CD8-positive, alpha-beta T cell (primary cell): ENCODE measurements at regions of chr12 and their contacts with region 1.

Region 1: GRCh38 chr12:71694099-71694820 is 8.4 kb downstream of the TMEM19 start:
- DNase-seq: no peak
- ATAC-seq: no peak
- H3K4me3 ChIP-seq: no peak overlapping the region
- H3K4me3 Mint-ChIP-seq: no peak overlapping the region
- H3K27ac ChIP-seq: no peak overlapping the region
- H3K27ac Mint-ChIP-seq: no peak overlapping the region
- H3K4me1 ChIP-seq: peaks cover 2% of the 10 kb centered on the region
- H3K4me1 Mint-ChIP-seq: peaks cover 16% of the 10 kb centered on the region
- H3K27me3 ChIP-seq: no peaks in the 10 kb centered on the region
- H3K27me3 Mint-ChIP-seq: no peaks in the 10 kb centered on the region
- CTCF ChIP-seq: no peak

Region 2: DNA sequence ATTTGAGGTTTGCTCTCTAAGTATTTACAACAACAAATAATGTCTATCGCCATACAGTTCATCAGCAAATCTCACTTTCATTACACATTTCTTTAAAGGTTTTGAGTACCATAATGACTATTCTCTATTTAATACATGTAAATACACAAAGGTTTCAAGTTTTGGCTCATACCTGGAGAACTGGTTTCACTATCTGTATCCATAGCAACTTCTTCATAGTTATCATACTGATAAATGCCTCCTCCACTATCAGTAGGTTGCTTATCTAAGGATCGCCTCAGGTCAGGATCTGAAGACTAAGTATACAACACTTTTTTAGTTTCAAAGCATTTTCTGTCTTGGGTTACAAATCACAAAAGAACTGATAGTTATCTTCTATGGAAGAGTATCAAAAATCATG is 52.0 kb before region 1 on chr12:
- CTCF ChIA-PET with region 1: no interaction called
- POLR2A ChIA-PET with region 1: no interaction called
- intact Hi-C with region 1: loop called in 1 of 2 experiments (anchors 10 kb)
- DNase-seq: no peak
- ATAC-seq: no peak
- H3K4me3 ChIP-seq: no peak overlapping the region
- H3K4me3 Mint-ChIP-seq: no peak overlapping the region
- H3K27ac ChIP-seq: no peak overlapping the region
- H3K27ac Mint-ChIP-seq: no peak overlapping the region
- H3K4me1 ChIP-seq: peaks cover 7% of the 10 kb centered on the region
- H3K4me1 Mint-ChIP-seq: peaks cover 26% of the 10 kb centered on the region
- H3K27me3 ChIP-seq: no peaks in the 10 kb centered on the region
- H3K27me3 Mint-ChIP-seq: no peaks in the 10 kb centered on the region
- CTCF ChIP-seq: no peak